GM12878 (cell line): ENCODE measurements at regions of chr2 and their contacts with region 1.

Region 1: GRCh38 chr2:37877457-37878315 is 47.4 kb upstream of the RMDN2 start:
- DNase-seq: no peak
- ATAC-seq: peak; percentile 77
- H3K4me3 ChIP-seq: no peak overlapping the region
- H3K27ac ChIP-seq: no peak overlapping the region
- H3K4me1 ChIP-seq: peaks cover 8% of the 10 kb centered on the region
- H3K27me3 ChIP-seq: peaks cover 0 to 2% of the 10 kb centered on the region in 2 experiments; a peak in 2 of 4 replicates
- CTCF ChIP-seq: peak; percentile 44 to 64 (median 63); a peak in 5 of 6 replicates
- EP300 ChIP-seq: no peak
- POLR2A ChIP-seq: no peak
- RAD21 ChIP-seq: peak; percentile 91

Region 2: GRCh38 chr2:37376421-37377186 is 501.1 kb before region 1 on chr2:
- CTCF ChIA-PET with region 1: interaction called, 10 read pairs
- POLR2A ChIA-PET with region 1: no interaction called
- RAD21 ChIA-PET with region 1: interaction called, 10 read pairs
- SMC1A ChIA-PET with region 1: interaction called, 3 read pairs
- in situ Hi-C with region 1: no loop called
- intact Hi-C with region 1: no loop called
- DNase-seq: peak; percentile 78
- ATAC-seq: peak; percentile 96
- H3K4me3 ChIP-seq: peak overlapping the region; percentile 41; the same call in 1 of the 2 replicates
- H3K27ac ChIP-seq: peak overlapping the region; percentile 43; the same call in 1 of the 2 replicates
- H3K4me1 ChIP-seq: peaks cover 24% of the 10 kb centered on the region
- H3K27me3 ChIP-seq: peaks cover 0 to 14% of the 10 kb centered on the region in 2 experiments; a peak in 1 of 4 replicates
- CTCF ChIP-seq: no peak
- EP300 ChIP-seq: peak; percentile 93 to 97; a peak in 3 of 4 replicates
- POLR2A ChIP-seq: no peak
- RAD21 ChIP-seq: no peak

Region 3: DNA sequence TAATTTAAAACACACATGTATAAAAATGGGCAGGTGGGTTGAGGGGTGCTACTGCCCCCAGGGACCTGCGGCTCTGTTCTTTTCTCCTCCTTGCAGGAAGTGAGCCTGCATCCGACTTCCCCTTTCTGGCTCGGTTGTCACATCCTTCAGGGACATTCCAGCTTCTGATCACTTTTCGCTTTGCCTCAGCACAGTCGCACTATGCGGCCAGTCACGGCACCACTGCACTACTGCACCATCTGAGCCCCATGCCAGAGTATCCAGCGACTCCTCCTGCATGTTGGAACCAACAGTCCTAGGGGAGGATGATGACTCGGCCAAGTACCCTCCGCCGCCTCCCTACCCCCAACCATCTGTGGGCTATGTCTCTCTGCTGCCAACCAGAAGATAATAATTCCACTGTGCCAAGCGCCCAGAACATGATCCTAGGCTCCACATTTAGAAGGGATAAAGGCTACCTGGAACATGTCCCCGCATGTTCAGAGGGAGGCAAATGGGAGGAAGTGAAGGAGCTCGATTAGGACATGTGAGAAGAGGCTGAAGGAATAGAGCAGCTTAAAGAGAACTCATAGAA is 223.8 kb before region 1 on chr2:
- CTCF ChIA-PET with region 1: interaction called, 21 read pairs
- POLR2A ChIA-PET with region 1: interaction called, 3 read pairs
- RAD21 ChIA-PET with region 1: interaction called, 43 read pairs
- SMC1A ChIA-PET with region 1: interaction called, 26 read pairs
- in situ Hi-C with region 1: no loop called
- intact Hi-C with region 1: loop called (anchors 5 kb)
- DNase-seq: peak; percentile 84
- ATAC-seq: peak; percentile 78
- H3K4me3 ChIP-seq: peak overlapping the region; percentile 75
- H3K27ac ChIP-seq: peak overlapping the region; percentile 99
- H3K4me1 ChIP-seq: peaks cover 69% of the 10 kb centered on the region
- H3K27me3 ChIP-seq: no peaks in the 10 kb centered on the region
- CTCF ChIP-seq: no peak
- EP300 ChIP-seq: peak; percentile 91 to 94
- POLR2A ChIP-seq: peak; percentile 93
- RAD21 ChIP-seq: peak; percentile 4; the same call in 1 of the 2 replicates

Region 4: GRCh38 chr2:37795938-37796337 is 81.7 kb before region 1 on chr2:
- CTCF ChIA-PET with region 1: interaction called, 13 read pairs
- POLR2A ChIA-PET with region 1: no interaction called
- RAD21 ChIA-PET with region 1: interaction called, 3 read pairs
- SMC1A ChIA-PET with region 1: interaction called, 4 read pairs
- in situ Hi-C with region 1: no loop called
- intact Hi-C with region 1: no loop called
- DNase-seq: no peak
- ATAC-seq: no peak
- H3K4me3 ChIP-seq: no peak overlapping the region
- H3K27ac ChIP-seq: no peak overlapping the region
- H3K4me1 ChIP-seq: peaks cover 3% of the 10 kb centered on the region; the same call in 1 of the 2 replicates
- H3K27me3 ChIP-seq: no peaks in the 10 kb centered on the region
- CTCF ChIP-seq: no peak
- EP300 ChIP-seq: no peak
- POLR2A ChIP-seq: no peak
- RAD21 ChIP-seq: no peak

Region 5: GRCh38 chr2:37843556-37843955 is 34.1 kb before region 1 on chr2:
- CTCF ChIA-PET with region 1: interaction called, 312 read pairs
- POLR2A ChIA-PET with region 1: interaction called, 3 read pairs
- RAD21 ChIA-PET with region 1: interaction called, 13 read pairs
- SMC1A ChIA-PET with region 1: interaction called, 244 read pairs
- in situ Hi-C with region 1: no loop called
- intact Hi-C with region 1: no loop called
- DNase-seq: no peak
- ATAC-seq: no peak
- H3K4me3 ChIP-seq: no peak overlapping the region
- H3K27ac ChIP-seq: no peak overlapping the region
- H3K4me1 ChIP-seq: no peaks in the 10 kb centered on the region
- H3K27me3 ChIP-seq: no peaks in the 10 kb centered on the region
- CTCF ChIP-seq: no peak
- EP300 ChIP-seq: no peak
- POLR2A ChIP-seq: no peak
- RAD21 ChIP-seq: no peak

Region 6: DNA sequence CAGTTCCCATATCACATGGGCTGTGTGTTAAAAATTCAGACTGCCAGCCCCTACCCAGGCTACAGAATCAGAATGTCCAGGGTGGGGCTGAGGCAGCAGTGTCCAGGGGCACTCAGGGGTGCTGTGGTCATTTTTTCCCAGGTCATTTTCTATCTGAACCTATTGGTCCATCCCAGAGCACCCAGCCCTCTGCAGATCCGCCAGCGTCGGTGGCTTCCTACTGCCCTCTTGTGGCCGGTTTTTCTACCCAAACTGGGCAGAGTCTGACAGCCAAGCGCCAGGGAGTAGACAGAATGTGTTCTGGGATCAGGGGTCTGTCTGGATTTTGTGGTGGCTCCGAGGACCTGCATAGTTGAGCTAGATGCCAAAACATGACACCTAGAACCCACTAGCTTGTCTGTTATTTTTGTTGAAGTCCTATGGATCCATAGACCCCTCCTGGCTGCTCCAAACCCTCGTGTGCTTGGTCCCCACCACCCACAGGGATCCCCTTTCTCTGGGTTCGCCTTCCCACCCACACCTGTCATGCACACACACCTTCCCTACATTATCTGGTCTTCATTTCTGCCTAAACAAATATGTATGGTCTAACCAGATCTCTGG is 13.3 kb after region 1 on chr2:
- CTCF ChIA-PET with region 1: interaction called, 82 read pairs
- POLR2A ChIA-PET with region 1: interaction called, 4 read pairs
- RAD21 ChIA-PET with region 1: interaction called, 9 read pairs
- SMC1A ChIA-PET with region 1: interaction called, 21 read pairs
- in situ Hi-C with region 1: no loop called
- intact Hi-C with region 1: no loop called
- DNase-seq: no peak
- ATAC-seq: peak; percentile 84
- H3K4me3 ChIP-seq: no peak overlapping the region
- H3K27ac ChIP-seq: no peak overlapping the region
- H3K4me1 ChIP-seq: peaks cover 43% of the 10 kb centered on the region
- H3K27me3 ChIP-seq: no peaks in the 10 kb centered on the region
- CTCF ChIP-seq: peak; percentile 73 to 84 (median 82)
- EP300 ChIP-seq: peak in 1 of 2 experiments; percentile 15; a peak in 1 of 4 replicates
- POLR2A ChIP-seq: no peak
- RAD21 ChIP-seq: peak; percentile 88